ENCODE measurements at regions of chr21 and their contacts with region 1.

Region 1: GRCh38 chr21:36209626-36210171 is 53.1 kb downstream of the DOP1B start:
- DNase-seq: no peak
- ATAC-seq: peak; percentile 78
- H3K4me3 ChIP-seq: no peak overlapping the region
- H3K27ac ChIP-seq: no peak overlapping the region
- H3K4me1 ChIP-seq: no peaks in the 10 kb centered on the region
- H3K27me3 ChIP-seq: no peaks in the 10 kb centered on the region
- CTCF ChIP-seq: peak; percentile 56 to 64 (median 62)
- EP300 ChIP-seq: no peak
- POLR2A ChIP-seq: no peak
- RAD21 ChIP-seq: peak; percentile 87

Region 2: DNA sequence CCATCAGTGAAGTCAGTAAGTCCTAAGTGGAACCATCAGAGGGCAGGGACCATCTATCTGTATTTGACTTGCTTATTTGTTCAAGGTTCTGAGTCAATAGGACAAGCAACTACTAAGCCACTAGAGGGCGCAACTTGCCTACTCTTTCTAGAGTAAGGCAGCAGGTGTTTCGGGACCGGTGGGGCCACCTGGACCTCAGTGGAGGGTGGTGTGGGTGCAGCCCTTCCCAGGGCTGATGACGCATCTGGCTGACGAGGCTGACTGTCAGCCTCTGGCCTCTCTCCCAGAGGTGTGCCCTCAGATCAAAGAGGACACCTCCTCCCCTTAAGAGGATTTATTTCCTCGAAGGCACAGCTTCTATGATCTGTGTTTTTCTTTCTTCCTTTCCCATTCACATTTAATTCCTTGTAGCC is 68.2 kb before region 1 on chr21:
- CTCF ChIA-PET with region 1: interaction called, 45 read pairs
- POLR2A ChIA-PET with region 1: no interaction called
- RAD21 ChIA-PET with region 1: interaction called, 6 read pairs
- SMC1A ChIA-PET with region 1: interaction called, 3 read pairs
- in situ Hi-C with region 1: no loop called
- intact Hi-C with region 1: loop called (anchors 1 kb)
- DNase-seq: peak; percentile 53
- ATAC-seq: peak; percentile 98
- H3K4me3 ChIP-seq: no peak overlapping the region
- H3K27ac ChIP-seq: no peak overlapping the region
- H3K4me1 ChIP-seq: peaks cover 1% of the 10 kb centered on the region; the same call in 1 of the 2 replicates
- H3K27me3 ChIP-seq: peaks cover 0 to 1% of the 10 kb centered on the region in 2 experiments; a peak in 1 of 4 replicates
- CTCF ChIP-seq: peak; percentile 74 to 93 (median 85)
- EP300 ChIP-seq: no peak
- POLR2A ChIP-seq: no peak
- RAD21 ChIP-seq: peak; percentile 96

Region 3: GRCh38 chr21:36156339-36156814 is 53.3 kb before region 1 on chr21:
- CTCF ChIA-PET with region 1: interaction called, 13 read pairs
- POLR2A ChIA-PET with region 1: no interaction called
- RAD21 ChIA-PET with region 1: interaction called, 4 read pairs
- SMC1A ChIA-PET with region 1: interaction called, 15 read pairs
- in situ Hi-C with region 1: no loop called
- intact Hi-C with region 1: loop called (anchors 2 kb)
- DNase-seq: peak; percentile 87
- ATAC-seq: peak; percentile 95
- H3K4me3 ChIP-seq: peak overlapping the region; percentile 87; the same call in 1 of the 2 replicates
- H3K27ac ChIP-seq: no peak overlapping the region; the same call in 1 of the 2 replicates
- H3K4me1 ChIP-seq: peaks cover 9% of the 10 kb centered on the region
- H3K27me3 ChIP-seq: no peaks in the 10 kb centered on the region
- CTCF ChIP-seq: no peak
- EP300 ChIP-seq: no peak
- POLR2A ChIP-seq: no peak
- RAD21 ChIP-seq: no peak

Region 4: DNA sequence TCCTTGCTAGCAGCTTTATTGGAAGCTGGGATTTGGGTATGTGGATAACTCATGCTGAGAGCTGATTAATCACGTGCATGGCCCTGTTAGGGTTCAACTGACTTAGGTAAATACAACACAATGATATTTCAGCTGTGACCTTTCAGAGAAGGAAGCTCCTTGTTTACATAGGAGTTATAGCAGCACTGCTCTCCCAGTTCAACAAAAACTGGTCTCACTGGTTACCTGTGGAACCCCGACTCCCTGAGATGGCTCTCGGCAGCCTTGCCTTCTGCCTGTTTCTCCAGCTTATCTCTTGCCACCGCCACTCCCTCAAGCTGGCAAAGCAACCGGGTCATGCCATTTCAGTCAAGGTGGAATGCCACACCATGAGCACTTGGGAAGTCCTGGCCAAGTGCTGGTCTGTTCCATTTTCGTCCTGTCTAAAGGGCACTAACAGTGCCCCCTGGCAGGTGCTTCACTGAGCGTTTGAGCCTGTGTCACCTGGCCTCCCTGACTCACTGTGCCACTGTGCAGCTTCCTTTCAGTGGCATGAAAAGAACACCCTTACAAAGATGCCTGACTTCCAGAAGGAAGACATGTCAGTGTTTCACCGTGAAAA is 21.5 kb before region 1 on chr21:
- CTCF ChIA-PET with region 1: no interaction called
- POLR2A ChIA-PET with region 1: no interaction called
- RAD21 ChIA-PET with region 1: no interaction called
- SMC1A ChIA-PET with region 1: no interaction called
- in situ Hi-C with region 1: no loop called
- intact Hi-C with region 1: no loop called
- DNase-seq: no peak
- ATAC-seq: no peak
- H3K4me3 ChIP-seq: no peak overlapping the region
- H3K27ac ChIP-seq: no peak overlapping the region
- H3K4me1 ChIP-seq: no peaks in the 10 kb centered on the region; the same call in 1 of the 2 replicates
- H3K27me3 ChIP-seq: no peaks in the 10 kb centered on the region
- CTCF ChIP-seq: no peak
- EP300 ChIP-seq: no peak
- POLR2A ChIP-seq: no peak
- RAD21 ChIP-seq: no peak

Region 5: GRCh38 chr21:36255663-36256062 is 46.0 kb after region 1 on chr21:
- CTCF ChIA-PET with region 1: interaction called, 10 read pairs
- POLR2A ChIA-PET with region 1: interaction called, 4 read pairs
- RAD21 ChIA-PET with region 1: no interaction called
- SMC1A ChIA-PET with region 1: interaction called, 3 read pairs
- in situ Hi-C with region 1: no loop called
- intact Hi-C with region 1: no loop called
- DNase-seq: peak; percentile 63
- ATAC-seq: peak; percentile 85
- H3K4me3 ChIP-seq: peak overlapping the region; percentile 45; the same call in 1 of the 2 replicates
- H3K27ac ChIP-seq: peak overlapping the region; percentile 63
- H3K4me1 ChIP-seq: peaks cover 24% of the 10 kb centered on the region
- H3K27me3 ChIP-seq: no peaks in the 10 kb centered on the region
- CTCF ChIP-seq: no peak
- EP300 ChIP-seq: no peak
- POLR2A ChIP-seq: no peak
- RAD21 ChIP-seq: peak; percentile 9; the same call in 1 of the 2 replicates

Region 6: GRCh38 chr21:36330904-36331303 is 121.2 kb after region 1 on chr21:
- CTCF ChIA-PET with region 1: interaction called, 14 read pairs
- POLR2A ChIA-PET with region 1: no interaction called
- RAD21 ChIA-PET with region 1: interaction called, 3 read pairs
- SMC1A ChIA-PET with region 1: interaction called, 8 read pairs
- in situ Hi-C with region 1: no loop called
- intact Hi-C with region 1: no loop called
- DNase-seq: peak; percentile 16
- ATAC-seq: peak; percentile 97
- H3K4me3 ChIP-seq: no peak overlapping the region
- H3K27ac ChIP-seq: no peak overlapping the region
- H3K4me1 ChIP-seq: 0 out of 2 replicates have a peak, but pooled peaks cover 3% of the 10 kb centered on the region
- H3K27me3 ChIP-seq: no peaks in the 10 kb centered on the region
- CTCF ChIP-seq: peak; percentile 72 to 79 (median 75); a peak in 5 of 6 replicates
- EP300 ChIP-seq: no peak
- POLR2A ChIP-seq: no peak
- RAD21 ChIP-seq: peak; percentile 87

Region 7: DNA sequence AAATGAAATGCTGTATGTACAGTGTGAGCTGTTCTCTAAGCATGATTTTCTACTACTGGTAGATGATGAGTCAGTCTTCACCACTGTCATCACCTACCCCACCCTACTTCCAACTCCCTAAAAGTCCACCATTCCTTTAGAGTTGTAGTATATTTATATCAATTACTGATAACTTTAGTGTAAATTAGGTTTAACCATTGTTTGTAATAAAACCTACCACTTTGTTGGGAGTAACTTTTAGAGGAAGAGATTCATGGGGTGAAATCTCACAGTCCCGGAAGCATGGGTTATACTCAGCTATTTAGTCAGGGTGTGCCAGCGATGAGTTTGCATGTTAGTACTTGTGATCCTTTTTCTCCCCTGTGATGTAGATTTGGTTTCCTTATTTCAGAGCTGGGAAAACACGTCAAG is 127.4 kb after region 1 on chr21:
- CTCF ChIA-PET with region 1: interaction called, 10 read pairs
- POLR2A ChIA-PET with region 1: no interaction called
- RAD21 ChIA-PET with region 1: interaction called, 3 read pairs
- SMC1A ChIA-PET with region 1: interaction called, 8 read pairs
- in situ Hi-C with region 1: no loop called
- intact Hi-C with region 1: no loop called
- DNase-seq: no peak
- ATAC-seq: no peak
- H3K4me3 ChIP-seq: no peak overlapping the region
- H3K27ac ChIP-seq: no peak overlapping the region
- H3K4me1 ChIP-seq: no peaks in the 10 kb centered on the region
- H3K27me3 ChIP-seq: no peaks in the 10 kb centered on the region
- CTCF ChIP-seq: no peak
- EP300 ChIP-seq: no peak
- POLR2A ChIP-seq: no peak
- RAD21 ChIP-seq: no peak

Measured in GM12878 (cell line).